Naive thymus-derived CD4-positive, alpha-beta T cell (primary cell): ENCODE measurements at regions of chr7 and their contacts with region 1.

Region 1: DNA sequence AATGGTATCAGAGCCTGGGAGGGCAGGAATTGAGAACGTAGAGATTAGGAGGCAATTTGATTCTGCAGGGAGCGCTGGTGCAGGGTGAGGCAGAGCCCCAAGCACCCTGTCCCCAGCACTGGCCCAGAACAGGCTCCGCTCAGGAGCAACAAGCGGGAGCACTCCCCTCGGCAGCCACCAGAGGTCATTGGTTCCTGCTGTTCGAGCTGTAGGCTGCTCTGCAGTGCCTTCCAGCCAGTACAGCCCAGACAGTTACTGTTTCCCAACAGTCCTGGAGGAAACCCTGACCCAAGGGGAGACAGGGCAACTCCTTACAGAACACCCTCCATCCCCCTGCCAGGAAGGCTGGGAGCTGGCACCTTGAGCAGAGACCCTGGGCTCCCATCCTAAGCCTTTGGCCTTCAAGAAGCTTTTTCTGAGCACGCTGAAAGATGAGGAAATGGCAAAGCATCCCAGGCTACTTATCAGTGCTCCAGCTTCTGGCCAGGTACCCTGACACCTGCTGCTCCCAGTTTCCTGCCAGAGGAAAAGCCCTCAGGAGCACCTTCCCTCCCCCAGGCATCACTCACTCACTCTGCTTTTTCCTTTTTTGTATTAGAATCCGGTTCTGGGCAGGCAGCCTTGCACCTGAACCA is 71.2 kb upstream of the EFCAB10 start:
- DNase-seq: peak; percentile 34 to 68 (median 58)
- ATAC-seq: peak; percentile 82
- H3K4me3 ChIP-seq: no peak overlapping the region
- H3K4me3 Mint-ChIP-seq: no peak overlapping the region
- H3K27ac ChIP-seq: no peak overlapping the region
- H3K27ac Mint-ChIP-seq: peak overlapping the region in 2 of 9 donors; percentile 27 to 59
- H3K4me1 ChIP-seq: peaks cover 0 to 5% of the 10 kb centered on the region in 2 donors
- H3K4me1 Mint-ChIP-seq: peaks cover 9 to 24% (median 14%) of the 10 kb centered on the region in 7 donors
- H3K27me3 ChIP-seq: no peaks in the 10 kb centered on the region
- H3K27me3 Mint-ChIP-seq: no peaks in the 10 kb centered on the region

Region 2: GRCh38 chr7:105454095-105454747 is 198.3 kb before region 1 on chr7:
- CTCF ChIA-PET with region 1: no interaction called
- POLR2A ChIA-PET with region 1: no interaction called
- intact Hi-C with region 1: no loop called
- DNase-seq: no peak
- ATAC-seq: no peak
- H3K4me3 ChIP-seq: no peak overlapping the region
- H3K4me3 Mint-ChIP-seq: no peak overlapping the region
- H3K27ac ChIP-seq: no peak overlapping the region
- H3K27ac Mint-ChIP-seq: peak overlapping the region in 1 of 9 donors; percentile 25
- H3K4me1 ChIP-seq: peaks cover 0 to 3% of the 10 kb centered on the region in 2 donors
- H3K4me1 Mint-ChIP-seq: peaks cover 0 to 5% (median 0%) of the 10 kb centered on the region in 7 donors
- H3K27me3 ChIP-seq: no peaks in the 10 kb centered on the region
- H3K27me3 Mint-ChIP-seq: peaks cover 0 to 4% (median 0%) of the 10 kb centered on the region in 5 donors

Region 3: GRCh38 chr7:105691733-105692564 is 39.5 kb after region 1 on chr7:
- CTCF ChIA-PET with region 1: interaction called, 7 read pairs
- POLR2A ChIA-PET with region 1: interaction called, 6 read pairs
- intact Hi-C with region 1: loop called in 1 of 2 experiments (anchors 1 kb)
- DNase-seq: peak; percentile 22 to 94 (median 90)
- ATAC-seq: peak; percentile 89
- H3K4me3 ChIP-seq: peak overlapping the region; percentile 94
- H3K4me3 Mint-ChIP-seq: peak overlapping the region; percentile 84 to 98 (median 92)
- H3K27ac ChIP-seq: peak overlapping the region; percentile 83
- H3K27ac Mint-ChIP-seq: peak overlapping the region; percentile 95 to 100 (median 99)
- H3K4me1 ChIP-seq: peaks cover 19 to 21% of the 10 kb centered on the region in 2 donors
- H3K4me1 Mint-ChIP-seq: peaks cover 33 to 78% (median 65%) of the 10 kb centered on the region in 7 donors
- H3K27me3 ChIP-seq: no peaks in the 10 kb centered on the region
- H3K27me3 Mint-ChIP-seq: no peaks in the 10 kb centered on the region

Region 4: DNA sequence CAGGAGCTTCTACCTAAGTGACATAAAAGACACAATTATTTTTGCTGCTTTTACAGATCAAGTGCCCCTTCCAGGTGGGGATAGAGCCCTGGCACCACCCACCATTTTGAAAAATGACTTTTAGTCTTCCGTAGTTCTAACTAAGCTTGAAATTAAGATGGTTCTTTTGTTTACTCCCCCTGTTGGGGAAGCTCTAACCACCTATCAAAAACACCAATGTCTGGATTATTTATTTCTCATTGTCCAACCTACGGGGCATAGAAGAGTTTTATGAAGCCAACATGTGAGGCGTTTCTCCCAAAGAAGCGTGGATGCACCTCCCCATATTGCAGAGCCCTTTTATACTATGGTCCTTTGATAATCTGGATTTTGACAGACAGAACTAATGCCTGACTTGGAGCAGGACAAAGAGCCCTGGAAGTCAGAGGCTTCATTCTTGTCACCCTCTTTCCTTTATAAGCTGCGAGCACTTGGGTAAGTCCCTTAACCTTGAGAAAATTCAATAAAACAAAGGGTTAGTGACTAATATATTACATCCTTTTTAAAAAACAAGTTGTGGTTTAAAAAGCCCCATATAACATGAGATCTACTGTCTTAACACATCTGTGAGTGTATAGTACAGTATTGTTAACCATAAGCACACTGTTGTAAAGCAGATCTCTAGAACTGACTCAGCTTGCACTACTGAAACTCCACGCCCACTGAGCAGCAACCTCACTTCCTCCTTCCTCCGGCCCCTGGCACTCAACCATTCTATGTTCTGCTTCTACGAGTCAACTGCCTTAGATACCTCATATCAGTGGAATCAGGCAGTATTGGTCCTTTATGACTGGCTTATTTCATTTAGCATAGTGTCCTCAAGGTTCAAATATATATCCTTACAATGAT is 156.5 kb after region 1 on chr7:
- CTCF ChIA-PET with region 1: no interaction called
- POLR2A ChIA-PET with region 1: no interaction called
- intact Hi-C with region 1: loop called in 1 of 2 experiments (anchors 1 kb)
- DNase-seq: peak; percentile 11 to 77 (median 38)
- ATAC-seq: peak; percentile 94
- H3K4me3 ChIP-seq: peak overlapping the region; percentile 25
- H3K4me3 Mint-ChIP-seq: peak overlapping the region in 8 of 10 donors; percentile 1 to 68 (median 31)
- H3K27ac ChIP-seq: peak overlapping the region; percentile 15
- H3K27ac Mint-ChIP-seq: peak overlapping the region in 8 of 9 donors; percentile 0 to 93 (median 45)
- H3K4me1 ChIP-seq: peaks cover 33 to 50% of the 10 kb centered on the region in 2 donors
- H3K4me1 Mint-ChIP-seq: peaks cover 40 to 73% (median 65%) of the 10 kb centered on the region in 7 donors
- H3K27me3 ChIP-seq: no peaks in the 10 kb centered on the region
- H3K27me3 Mint-ChIP-seq: no peaks in the 10 kb centered on the region

Region 5: GRCh38 chr7:106009403-106010226 is 357.1 kb after region 1 on chr7:
- CTCF ChIA-PET with region 1: interaction called, 3 read pairs
- POLR2A ChIA-PET with region 1: no interaction called
- intact Hi-C with region 1: loop called (anchors 1 kb)
- DNase-seq: peak; percentile 73 to 85 (median 81)
- ATAC-seq: peak; percentile 99
- H3K4me3 ChIP-seq: no peak overlapping the region
- H3K4me3 Mint-ChIP-seq: peak overlapping the region in 9 of 10 donors; percentile 36 to 69 (median 55)
- H3K27ac ChIP-seq: no peak overlapping the region
- H3K27ac Mint-ChIP-seq: peak overlapping the region in 7 of 9 donors; percentile 38 to 93 (median 86)
- H3K4me1 ChIP-seq: peaks cover 0 to 30% of the 10 kb centered on the region in 2 donors
- H3K4me1 Mint-ChIP-seq: peaks cover 17 to 51% (median 45%) of the 10 kb centered on the region in 7 donors
- H3K27me3 ChIP-seq: no peaks in the 10 kb centered on the region
- H3K27me3 Mint-ChIP-seq: peaks cover 0 to 42% (median 0%) of the 10 kb centered on the region in 5 donors

Region 6: GRCh38 chr7:106153891-106154449 is 501.5 kb after region 1 on chr7:
- CTCF ChIA-PET with region 1: interaction called, 6 read pairs
- POLR2A ChIA-PET with region 1: no interaction called
- intact Hi-C with region 1: loop called (anchors 5 to 10 kb)
- DNase-seq: peak; percentile 51 to 76 (median 66)
- ATAC-seq: peak; percentile 95
- H3K4me3 ChIP-seq: no peak overlapping the region
- H3K4me3 Mint-ChIP-seq: peak overlapping the region in 8 of 10 donors; percentile 7 to 76 (median 58)
- H3K27ac ChIP-seq: no peak overlapping the region
- H3K27ac Mint-ChIP-seq: peak overlapping the region in 1 of 9 donors; percentile 82
- H3K4me1 ChIP-seq: peaks cover 0 to 8% of the 10 kb centered on the region in 2 donors
- H3K4me1 Mint-ChIP-seq: peaks cover 0 to 13% (median 8%) of the 10 kb centered on the region in 7 donors
- H3K27me3 ChIP-seq: peaks cover 0 to 4% of the 10 kb centered on the region in 2 donors
- H3K27me3 Mint-ChIP-seq: peaks cover 0 to 33% (median 22%) of the 10 kb centered on the region in 5 donors